Lower leg skin (tissue), 4 donors: ENCODE measurements at regions of chr2 and their contacts with region 1.

Region 1: GRCh38 chr2:13522917-13523821 is 806.4 kb downstream of the TRIB2 start:
- DNase-seq: no peak
- H3K4me3 ChIP-seq: no peak overlapping the region
- CTCF ChIP-seq: no peak
- POLR2A ChIP-seq: no peak

Region 2: GRCh38 chr2:13714466-13714865 is 191.3 kb after region 1 on chr2:
- intact Hi-C with region 1: no loop called
- DNase-seq: no peak
- H3K4me3 ChIP-seq: no peak overlapping the region
- CTCF ChIP-seq: no peak
- POLR2A ChIP-seq: no peak

Region 3: GRCh38 chr2:14558335-14558919 is 1035.3 kb after region 1 on chr2:
- intact Hi-C with region 1: loop called (anchors 10 kb)
- DNase-seq: no peak
- H3K4me3 ChIP-seq: no peak overlapping the region
- CTCF ChIP-seq: no peak
- POLR2A ChIP-seq: no peak